Activated CD4-positive, alpha-beta memory T cell treated with anti-CD3 and anti-CD28 coated beads for 36 hours (primary cell): ENCODE measurements at regions of chr18 and their contacts with region 1.

Region 1: DNA sequence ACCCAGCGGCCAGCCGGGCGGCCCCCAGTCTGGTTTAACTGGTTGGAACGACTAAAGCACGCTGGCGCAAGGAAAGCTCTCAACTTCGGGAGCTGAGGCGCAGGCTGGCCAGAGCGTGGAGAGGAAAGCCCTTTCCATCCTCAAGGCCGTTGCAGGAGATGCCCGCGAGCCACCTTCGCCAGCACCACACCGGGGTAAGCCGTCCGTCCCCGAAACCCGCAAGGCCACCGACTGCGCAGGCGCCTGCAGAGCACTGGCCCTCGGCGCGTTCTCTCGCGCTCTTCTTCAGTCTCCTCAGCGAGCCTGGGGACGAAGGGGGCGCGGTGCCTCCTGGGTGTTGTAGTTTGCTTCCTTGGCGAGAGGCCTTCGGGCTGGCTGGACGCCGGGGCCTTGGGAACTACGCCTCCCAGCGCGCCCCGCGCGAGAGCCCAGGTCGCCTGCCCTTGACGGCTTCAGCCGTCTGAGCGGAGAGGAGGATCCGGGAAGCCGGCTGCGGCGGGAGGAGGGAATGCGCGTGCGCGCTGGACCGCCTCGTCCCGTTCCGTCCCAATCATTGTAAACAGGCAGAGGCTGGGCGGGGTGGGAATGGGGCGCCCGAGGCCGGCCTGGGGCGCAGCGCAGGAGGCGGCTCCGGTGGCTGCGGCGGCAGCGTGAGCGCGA is at the start of gene RALBP1:
- DNase-seq: peak; percentile 99
- H3K4me3 Mint-ChIP-seq: peak within 1 kb of the TSS; percentile 92
- H3K27ac Mint-ChIP-seq: peak within 1 kb of the TSS; percentile 93
- H3K4me1 Mint-ChIP-seq: peaks cover 28% of the 10 kb centered on the region
- H3K27me3 Mint-ChIP-seq: peaks cover 11% of the 10 kb centered on the region
- total RNA-seq, gene RALBP1: 53.1 to 54.7 TPM

Region 2: DNA sequence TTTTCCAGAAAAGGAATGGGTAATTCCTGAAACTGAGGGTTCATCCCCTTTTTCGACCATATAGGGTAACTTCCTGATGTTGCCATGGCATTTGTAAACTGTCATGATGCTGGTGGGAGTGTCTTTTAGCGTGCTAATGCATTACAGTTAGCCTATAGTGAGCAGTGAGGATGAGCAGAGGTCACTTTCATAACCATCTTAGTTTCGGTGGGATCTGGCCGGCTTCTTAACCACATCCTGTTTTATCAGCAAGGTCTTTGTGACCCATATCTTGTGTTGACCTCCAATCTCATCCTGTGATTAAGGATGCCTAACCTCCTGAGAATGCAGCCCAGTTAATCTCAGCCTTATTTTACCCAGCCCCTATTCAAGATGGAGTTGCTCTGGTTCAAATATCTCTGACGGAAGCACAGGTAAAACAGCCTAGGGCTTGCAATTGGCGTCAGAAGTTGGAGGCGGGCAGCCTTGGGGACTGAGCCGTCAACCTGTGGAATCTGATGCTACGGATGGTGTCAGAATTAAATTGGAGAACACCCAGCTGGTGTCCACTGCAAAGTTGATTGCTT is 19.7 kb after region 1 on chr18:
- CTCF ChIA-PET with region 1: no interaction called
- POLR2A ChIA-PET with region 1: interaction called, 3 read pairs
- intact Hi-C with region 1: loop called (anchors 1 kb)
- DNase-seq: peak; percentile 33
- H3K4me3 Mint-ChIP-seq: no peak overlapping the region
- H3K27ac Mint-ChIP-seq: no peak overlapping the region
- H3K4me1 Mint-ChIP-seq: peaks cover 24% of the 10 kb centered on the region
- H3K27me3 Mint-ChIP-seq: no peaks in the 10 kb centered on the region

Region 3: GRCh38 chr18:9516437-9517064 is 41.4 kb after region 1 on chr18:
- CTCF ChIA-PET with region 1: interaction called, 9 read pairs
- POLR2A ChIA-PET with region 1: no interaction called
- intact Hi-C with region 1: loop called (anchors 5 kb)
- DNase-seq: no peak
- H3K4me3 Mint-ChIP-seq: no peak overlapping the region
- H3K27ac Mint-ChIP-seq: no peak overlapping the region
- H3K4me1 Mint-ChIP-seq: peaks cover 3% of the 10 kb centered on the region
- H3K27me3 Mint-ChIP-seq: no peaks in the 10 kb centered on the region